Adrenal gland (tissue), 19 donors: ENCODE measurements at regions of chr7 and their contacts with region 1.

Region 1: DNA sequence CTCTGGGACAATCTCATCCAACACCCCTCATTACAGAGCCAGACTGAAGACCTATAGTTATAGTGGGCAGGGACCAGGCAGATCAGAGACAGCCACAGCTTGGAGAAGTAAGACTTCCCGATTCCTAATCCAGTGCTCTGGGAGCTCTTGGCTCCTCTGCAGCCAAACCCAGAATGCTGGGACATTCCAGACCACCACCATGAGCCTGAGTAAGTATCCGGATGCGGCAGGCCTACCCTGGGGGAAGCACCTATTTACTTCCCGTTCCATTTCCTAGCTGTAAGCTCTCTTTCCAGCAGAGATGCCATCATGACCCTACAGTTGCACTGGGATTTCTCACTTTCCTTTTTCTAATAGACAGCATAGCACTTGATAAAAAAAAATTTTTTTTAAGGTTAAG is 16.4 kb downstream of the HIP1 start:
- DNase-seq: no peak
- H3K4me3 ChIP-seq: no peak overlapping the region
- H3K27ac ChIP-seq: no peak overlapping the region
- H3K4me1 ChIP-seq: peaks cover 0 to 5% of the 10 kb centered on the region in 2 donors
- H3K27me3 ChIP-seq: no peaks in the 10 kb centered on the region
- CTCF ChIP-seq: no peak
- POLR2A ChIP-seq: no peak

Region 2: DNA sequence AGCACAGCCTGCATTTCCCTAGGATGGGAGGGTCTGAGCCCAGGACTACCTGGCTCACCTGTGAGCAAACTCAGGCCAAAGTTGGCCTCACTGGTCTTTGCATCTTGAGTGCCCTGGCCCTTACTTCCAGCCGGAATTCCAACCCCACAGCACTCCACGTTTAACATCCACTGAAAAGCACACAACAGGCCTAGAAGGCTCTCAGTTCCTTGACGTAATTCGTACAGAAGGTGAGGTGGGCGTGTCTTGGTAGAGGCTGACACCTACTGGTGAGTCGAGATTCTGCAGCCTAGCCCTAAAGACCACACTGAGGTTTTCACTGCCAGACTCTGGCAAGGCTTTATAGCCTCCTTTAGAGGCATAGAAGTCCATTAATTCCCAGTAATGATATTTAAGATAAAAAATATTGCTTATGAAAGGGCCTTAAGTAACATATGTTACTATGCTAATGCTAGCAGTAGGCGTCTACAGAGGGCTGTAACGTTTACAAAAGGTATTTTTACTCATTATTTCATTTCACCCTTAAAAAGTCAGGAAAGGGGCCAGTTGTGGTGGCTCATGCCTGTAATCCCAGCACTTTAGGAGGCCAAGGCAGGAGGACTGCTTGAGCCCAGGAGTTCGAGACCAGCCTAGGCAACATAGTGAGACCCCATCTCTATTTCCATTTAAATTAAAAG is 79.4 kb before region 1 on chr7:
- intact Hi-C with region 1: no loop called
- DNase-seq: peak; percentile 61 to 87 (median 71)
- H3K4me3 ChIP-seq: no peak overlapping the region
- H3K27ac ChIP-seq: no peak overlapping the region
- H3K4me1 ChIP-seq: peaks cover 6 to 13% of the 10 kb centered on the region in 2 donors
- H3K27me3 ChIP-seq: no peaks in the 10 kb centered on the region
- CTCF ChIP-seq: peak; percentile 65 to 91 (median 86)
- POLR2A ChIP-seq: no peak

Region 3: DNA sequence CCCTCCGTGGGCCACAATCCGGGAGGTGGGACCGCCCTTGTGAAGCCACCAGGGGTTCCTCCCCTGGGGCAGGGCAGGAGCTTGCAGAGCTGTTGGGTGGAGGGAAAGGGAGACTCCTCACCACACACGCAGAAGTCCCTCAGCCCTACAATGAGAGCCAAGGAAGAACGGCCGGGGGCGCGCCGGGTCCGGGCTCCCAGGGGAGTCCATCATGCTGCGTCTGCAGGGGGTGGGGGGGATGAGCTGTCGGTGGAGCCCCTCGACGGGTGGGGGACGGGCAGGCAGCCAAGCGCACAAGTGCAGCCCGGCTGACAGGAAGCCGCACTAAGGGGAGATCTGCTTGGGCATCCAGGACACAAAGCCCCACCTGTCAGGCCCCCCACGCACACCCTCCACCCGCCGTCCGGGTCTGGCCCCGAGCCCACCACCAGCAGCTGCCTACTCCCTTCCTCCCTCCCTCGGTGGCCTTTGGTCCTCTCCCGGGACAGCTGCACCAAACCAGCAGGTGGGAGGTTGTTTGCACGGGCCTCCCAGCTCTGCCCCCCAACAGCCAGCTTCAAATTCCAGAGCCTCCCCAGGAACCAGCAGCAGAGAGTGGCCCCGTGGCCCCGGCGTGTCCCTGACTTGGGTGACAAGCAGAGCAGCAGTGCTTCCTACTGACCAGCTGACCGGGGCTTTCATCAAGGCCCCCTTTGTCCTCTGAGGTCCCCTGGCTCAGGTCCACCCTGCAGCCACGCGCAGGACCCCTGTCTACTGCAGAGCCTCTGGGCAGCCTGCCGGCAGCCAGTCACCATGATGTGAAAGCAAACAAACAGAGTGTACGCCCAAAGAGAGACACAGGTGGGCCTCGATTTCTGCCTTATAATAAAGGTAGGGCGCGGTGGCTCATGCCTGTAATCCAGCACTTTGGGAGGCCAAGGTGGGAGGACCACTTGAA is 33.9 kb before region 1 on chr7:
- intact Hi-C with region 1: loop called in 1 of 2 experiments (anchors 5 kb)
- DNase-seq: no peak
- H3K4me3 ChIP-seq: no peak overlapping the region
- H3K27ac ChIP-seq: no peak overlapping the region
- H3K4me1 ChIP-seq: no peaks in the 10 kb centered on the region
- H3K27me3 ChIP-seq: no peaks in the 10 kb centered on the region
- CTCF ChIP-seq: no peak
- POLR2A ChIP-seq: no peak

Region 4: GRCh38 chr7:75861636-75862035 is 139.3 kb after region 1 on chr7:
- intact Hi-C with region 1: no loop called
- DNase-seq: no peak
- H3K4me3 ChIP-seq: no peak overlapping the region
- H3K27ac ChIP-seq: peak overlapping the region in 2 of 5 donors; percentile 23 to 53
- H3K4me1 ChIP-seq: peaks cover 0 to 11% of the 10 kb centered on the region in 2 donors
- H3K27me3 ChIP-seq: no peaks in the 10 kb centered on the region
- CTCF ChIP-seq: peak in 1 of 6 experiments; percentile 1
- POLR2A ChIP-seq: no peak